ENCODE measurements at regions of chr12 and their contacts with region 1.

Region 1: DNA sequence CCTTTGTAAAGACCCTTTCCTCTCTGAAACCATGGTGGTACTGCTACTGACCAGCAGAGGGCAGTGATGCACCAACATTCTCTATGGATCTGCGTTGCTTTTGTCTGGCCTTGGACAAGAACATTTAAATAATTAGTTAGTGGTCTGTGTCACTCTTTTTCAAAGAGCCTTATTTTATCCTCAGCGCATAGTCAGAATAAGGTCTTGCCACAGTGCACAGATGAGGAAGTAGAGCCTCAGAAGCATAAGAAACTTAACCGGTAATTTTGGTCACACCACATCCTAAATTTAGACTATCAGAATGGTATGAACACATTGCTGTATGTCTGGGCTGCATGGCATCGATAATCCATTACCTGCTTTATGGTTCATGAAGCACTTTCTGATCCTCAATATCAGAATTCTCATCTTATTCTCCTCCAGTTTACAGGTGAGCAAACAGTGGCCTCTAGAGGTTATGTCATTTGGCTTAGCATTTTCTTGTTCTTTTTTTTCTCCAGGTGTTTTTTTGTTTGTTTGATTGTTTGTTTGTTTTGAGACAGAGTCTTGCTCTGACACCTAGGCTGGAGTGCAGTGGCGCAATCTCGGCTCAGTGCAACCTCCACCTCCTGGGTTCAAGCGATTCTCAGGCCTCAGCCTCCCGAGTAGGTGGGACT is 23.7 kb upstream of the IFT81 start:
- DNase-seq: no peak
- H3K4me3 ChIP-seq: no peak overlapping the region
- H3K27ac ChIP-seq: peak overlapping the region in 3 of 4 donors; percentile 44 to 77 (median 75)
- H3K4me1 ChIP-seq: peaks cover 0 to 23% (median 15%) of the 10 kb centered on the region in 3 donors
- H3K27me3 ChIP-seq: no peaks in the 10 kb centered on the region
- CTCF ChIP-seq: peak; percentile 90 to 95 (median 92)
- POLR2A ChIP-seq: no peak

Region 2: DNA sequence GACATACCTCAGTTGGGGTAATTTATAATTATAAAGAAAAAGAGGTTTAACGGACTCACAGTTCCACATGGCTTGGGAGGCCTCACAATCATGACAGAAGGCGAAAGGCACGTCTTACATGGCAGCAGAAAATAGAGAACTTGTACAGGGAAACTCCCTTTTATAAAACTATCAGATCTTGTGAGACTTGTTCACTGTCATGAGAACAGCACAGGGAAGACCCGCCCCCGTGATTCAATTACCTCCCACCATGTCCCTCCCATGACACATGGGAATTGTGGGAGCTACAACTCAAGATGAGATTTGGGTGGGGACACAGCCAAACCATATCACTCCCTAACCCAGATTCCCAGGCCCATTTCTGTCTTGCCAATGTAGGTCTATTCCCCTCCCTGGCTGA is 730.6 kb before region 1 on chr12:
- intact Hi-C with region 1: no loop called
- DNase-seq: no peak
- H3K4me3 ChIP-seq: no peak overlapping the region
- H3K27ac ChIP-seq: no peak overlapping the region
- H3K4me1 ChIP-seq: no peaks in the 10 kb centered on the region
- H3K27me3 ChIP-seq: peaks cover 0 to 12% (median 0%) of the 10 kb centered on the region in 4 donors
- CTCF ChIP-seq: no peak
- POLR2A ChIP-seq: no peak

Region 3: GRCh38 chr12:109804820-109805761 is 295.4 kb before region 1 on chr12:
- intact Hi-C with region 1: no loop called
- DNase-seq: no peak
- H3K4me3 ChIP-seq: no peak overlapping the region
- H3K27ac ChIP-seq: peak overlapping the region in 1 of 4 donors; percentile 5
- H3K4me1 ChIP-seq: no peaks in the 10 kb centered on the region
- H3K27me3 ChIP-seq: no peaks in the 10 kb centered on the region
- CTCF ChIP-seq: peak; percentile 90 to 99 (median 94)
- POLR2A ChIP-seq: no peak

Region 4: DNA sequence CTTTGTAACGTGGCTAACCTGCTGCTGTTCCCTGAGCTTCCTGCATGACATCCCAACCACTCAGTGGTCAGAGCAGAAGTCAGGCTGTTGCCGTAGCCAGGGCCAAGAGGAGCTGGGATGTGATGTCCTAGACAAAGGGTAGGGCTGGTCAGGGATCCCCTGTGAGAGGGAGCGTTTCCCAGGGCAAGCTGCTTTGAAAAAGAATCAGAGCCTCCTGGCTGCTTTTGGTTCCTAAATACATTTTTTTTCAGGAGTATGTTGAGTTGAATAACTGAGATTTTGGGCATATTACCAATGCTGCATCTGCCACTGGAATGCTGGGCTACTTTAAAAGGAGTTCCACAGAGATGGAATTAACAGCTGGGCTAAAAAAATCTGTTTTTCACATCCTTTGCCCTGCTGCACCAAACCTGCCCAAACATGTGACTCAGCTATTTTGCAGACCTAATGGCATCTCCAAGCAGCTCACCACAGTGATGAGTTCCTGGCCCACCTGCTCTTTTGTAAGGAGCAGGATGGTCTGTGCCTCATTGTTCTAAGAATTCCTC is 77.3 kb before region 1 on chr12:
- intact Hi-C with region 1: no loop called
- DNase-seq: no peak
- H3K4me3 ChIP-seq: no peak overlapping the region
- H3K27ac ChIP-seq: peak overlapping the region in 3 of 4 donors; percentile 21 to 45 (median 41)
- H3K4me1 ChIP-seq: peaks cover 0 to 31% (median 13%) of the 10 kb centered on the region in 3 donors
- H3K27me3 ChIP-seq: no peaks in the 10 kb centered on the region
- CTCF ChIP-seq: no peak
- POLR2A ChIP-seq: no peak

Region 5: DNA sequence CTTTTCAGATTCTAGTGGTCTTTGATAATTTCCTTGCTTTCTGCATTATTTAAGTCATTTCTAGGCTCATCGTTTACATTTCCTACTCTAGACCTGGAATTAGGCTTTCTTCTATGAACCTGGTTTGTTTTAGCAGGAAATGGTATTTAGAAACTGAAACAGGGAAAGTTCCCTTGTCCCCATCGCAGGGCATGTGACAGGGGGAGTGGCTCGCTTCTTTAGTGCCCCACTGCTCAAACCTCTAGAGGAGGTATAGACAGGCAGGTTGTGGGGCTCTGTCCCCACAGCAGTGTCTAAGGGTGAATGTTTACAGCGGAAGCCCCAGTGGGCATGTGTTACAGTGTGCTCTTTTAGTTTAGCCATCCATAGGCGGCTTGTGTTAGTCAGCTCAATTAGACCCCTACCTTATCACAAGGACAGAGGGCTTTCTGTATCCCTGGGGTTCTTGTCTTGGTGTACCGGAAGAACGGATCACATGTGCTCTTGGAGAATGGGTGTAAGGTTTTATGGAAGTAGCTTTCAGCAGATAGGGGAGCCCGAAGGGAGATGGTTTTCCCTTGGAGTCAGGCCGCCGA is 48.7 kb after region 1 on chr12:
- intact Hi-C with region 1: no loop called
- DNase-seq: no peak
- H3K4me3 ChIP-seq: no peak overlapping the region
- H3K27ac ChIP-seq: no peak overlapping the region
- H3K4me1 ChIP-seq: no peaks in the 10 kb centered on the region
- H3K27me3 ChIP-seq: no peaks in the 10 kb centered on the region
- CTCF ChIP-seq: no peak
- POLR2A ChIP-seq: no peak

Region 6: GRCh38 chr12:110431957-110432587 is 331.6 kb after region 1 on chr12:
- intact Hi-C with region 1: loop called (anchors 5 kb)
- DNase-seq: no peak
- H3K4me3 ChIP-seq: peak overlapping the region; percentile 30 to 68 (median 56)
- H3K27ac ChIP-seq: peak overlapping the region; percentile 14 to 86 (median 77)
- H3K4me1 ChIP-seq: peaks cover 0 to 12% (median 0%) of the 10 kb centered on the region in 3 donors
- H3K27me3 ChIP-seq: no peaks in the 10 kb centered on the region
- CTCF ChIP-seq: no peak
- POLR2A ChIP-seq: no peak